Activated CD4-positive, alpha-beta T cell treated with anti-CD3 and anti-CD28 coated beads for 36 hours (primary cell): ENCODE measurements at regions of chr6 and their contacts with region 1.

Region 1: DNA sequence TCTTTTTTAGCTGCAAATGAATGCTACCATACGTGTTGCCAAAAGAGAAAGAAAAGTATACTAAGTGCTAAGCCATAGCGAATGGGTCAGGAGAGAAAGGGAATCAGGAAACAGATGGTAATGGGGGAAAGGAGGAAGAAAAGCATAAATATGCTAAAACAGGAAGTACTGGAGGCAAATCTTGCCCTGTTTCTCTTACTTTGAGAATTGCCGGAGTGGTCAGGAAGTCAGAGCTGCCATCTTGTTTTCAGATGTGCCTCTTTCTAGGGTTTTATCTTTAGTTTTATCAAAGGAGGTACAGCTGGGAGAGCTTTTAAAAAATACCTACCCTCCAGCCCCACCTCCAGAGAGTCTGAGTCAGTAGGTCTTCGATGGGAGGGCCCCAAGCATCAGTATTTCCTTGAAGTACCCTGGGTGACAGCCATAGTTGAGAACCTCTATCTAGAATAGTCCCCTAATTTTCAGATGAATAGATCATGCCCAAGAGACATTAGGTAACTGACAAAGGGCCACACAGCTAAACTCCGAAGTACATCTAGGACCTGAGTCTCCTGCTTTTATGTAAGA is 193.3 kb downstream of the CLIC5 start:
- DNase-seq: peak; percentile 59
- ATAC-seq: peak; percentile 87
- H3K4me3 Mint-ChIP-seq: peak overlapping the region; percentile 59
- H3K27ac Mint-ChIP-seq: peak overlapping the region; percentile 95
- H3K4me1 Mint-ChIP-seq: peaks cover 37% of the 10 kb centered on the region
- H3K27me3 Mint-ChIP-seq: peaks cover 5% of the 10 kb centered on the region

Region 2: GRCh38 chr6:45436544-45437438 is 385.5 kb before region 1 on chr6:
- CTCF ChIA-PET with region 1: no interaction called
- POLR2A ChIA-PET with region 1: no interaction called
- intact Hi-C with region 1: loop called in 1 of 2 experiments (anchors 2 kb)
- DNase-seq: peak; percentile 69
- ATAC-seq: peak; percentile 92
- H3K4me3 Mint-ChIP-seq: peak overlapping the region; percentile 59
- H3K27ac Mint-ChIP-seq: peak overlapping the region; percentile 92
- H3K4me1 Mint-ChIP-seq: peaks cover 74% of the 10 kb centered on the region
- H3K27me3 Mint-ChIP-seq: peaks cover 2% of the 10 kb centered on the region

Region 3: GRCh38 chr6:45479834-45480751 is 342.2 kb before region 1 on chr6:
- CTCF ChIA-PET with region 1: no interaction called
- POLR2A ChIA-PET with region 1: no interaction called
- intact Hi-C with region 1: loop called in 1 of 2 experiments (anchors 5 kb)
- DNase-seq: peak; percentile 18
- ATAC-seq: peak; percentile 47
- H3K4me3 Mint-ChIP-seq: no peak overlapping the region
- H3K27ac Mint-ChIP-seq: peak overlapping the region; percentile 44
- H3K4me1 Mint-ChIP-seq: peaks cover 34% of the 10 kb centered on the region
- H3K27me3 Mint-ChIP-seq: no peaks in the 10 kb centered on the region

Region 4: DNA sequence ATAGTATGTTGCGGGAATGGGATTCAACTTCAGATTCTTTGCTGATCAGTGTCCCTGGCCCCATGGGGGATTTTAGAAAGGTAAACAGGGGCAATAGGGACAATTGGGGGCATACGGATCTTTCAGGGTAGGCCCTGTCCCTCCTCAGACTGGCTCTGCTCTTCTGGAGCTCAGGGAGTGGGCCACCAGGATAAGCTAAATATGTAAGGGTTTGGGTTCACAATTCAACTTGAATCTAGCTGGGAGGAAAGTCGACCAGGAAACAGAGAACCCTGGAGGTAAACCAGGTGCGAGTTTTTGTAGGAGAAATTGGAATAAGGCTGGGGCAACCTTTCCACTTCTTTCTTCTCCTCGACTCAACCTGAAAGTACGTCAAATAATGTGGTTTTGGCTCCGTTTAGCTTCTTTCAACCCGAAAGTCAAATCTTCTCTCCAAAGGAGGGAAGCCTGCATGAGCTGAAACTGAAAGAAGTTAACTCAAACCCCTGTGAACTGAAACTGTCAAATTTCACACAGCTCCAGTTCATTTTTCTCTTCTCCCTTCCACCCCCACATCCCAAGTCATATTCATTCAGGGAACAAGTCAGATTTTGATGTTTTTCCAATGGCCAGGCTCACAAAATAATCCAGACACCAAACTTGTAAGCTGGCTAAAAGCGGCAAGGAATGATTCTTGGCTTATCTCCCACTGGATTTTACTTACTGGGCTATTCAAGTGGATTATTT is 84.8 kb before region 1 on chr6:
- CTCF ChIA-PET with region 1: no interaction called
- POLR2A ChIA-PET with region 1: interaction called, 4 read pairs
- intact Hi-C with region 1: loop called in 1 of 2 experiments (anchors 2 kb)
- DNase-seq: peak; percentile 27
- ATAC-seq: peak; percentile 75
- H3K4me3 Mint-ChIP-seq: peak overlapping the region; percentile 13
- H3K27ac Mint-ChIP-seq: peak overlapping the region; percentile 84
- H3K4me1 Mint-ChIP-seq: peaks cover 56% of the 10 kb centered on the region
- H3K27me3 Mint-ChIP-seq: peaks cover 12% of the 10 kb centered on the region

Region 5: GRCh38 chr6:45801471-45802289 is 20.6 kb before region 1 on chr6:
- CTCF ChIA-PET with region 1: interaction called, 3 read pairs
- POLR2A ChIA-PET with region 1: interaction called, 4 read pairs
- intact Hi-C with region 1: loop called (anchors 1 to 2 kb)
- DNase-seq: peak; percentile 80
- ATAC-seq: peak; percentile 82
- H3K4me3 Mint-ChIP-seq: no peak overlapping the region
- H3K27ac Mint-ChIP-seq: peak overlapping the region; percentile 72
- H3K4me1 Mint-ChIP-seq: peaks cover 22% of the 10 kb centered on the region
- H3K27me3 Mint-ChIP-seq: peaks cover 2% of the 10 kb centered on the region

Region 6: GRCh38 chr6:46011241-46012085 is 189.1 kb after region 1 on chr6:
- CTCF ChIA-PET with region 1: no interaction called
- POLR2A ChIA-PET with region 1: no interaction called
- intact Hi-C with region 1: loop called in 1 of 2 experiments (anchors 1 kb)
- DNase-seq: peak; percentile 74
- ATAC-seq: peak; percentile 86
- H3K4me3 Mint-ChIP-seq: peak overlapping the region; percentile 39
- H3K27ac Mint-ChIP-seq: peak overlapping the region; percentile 58
- H3K4me1 Mint-ChIP-seq: peaks cover 51% of the 10 kb centered on the region
- H3K27me3 Mint-ChIP-seq: peaks cover 1% of the 10 kb centered on the region

Region 7: GRCh38 chr6:46876126-46876525 is 1053.8 kb after region 1 on chr6:
- CTCF ChIA-PET with region 1: no interaction called
- POLR2A ChIA-PET with region 1: no interaction called
- intact Hi-C with region 1: no loop called
- DNase-seq: no peak
- ATAC-seq: no peak
- H3K4me3 Mint-ChIP-seq: no peak overlapping the region
- H3K27ac Mint-ChIP-seq: no peak overlapping the region
- H3K4me1 Mint-ChIP-seq: no peaks in the 10 kb centered on the region
- H3K27me3 Mint-ChIP-seq: peaks cover 16% of the 10 kb centered on the region